Prostate gland (tissue), 2 donors: ENCODE measurements at regions of chr2 and their contacts with region 1.

Region 1: GRCh38 chr2:66699793-66700676 is 265.1 kb downstream of the MEIS1 start:
- DNase-seq: no peak
- H3K4me3 ChIP-seq: no peak overlapping the region
- H3K27ac ChIP-seq: peak overlapping the region; percentile 45
- H3K4me1 ChIP-seq: peaks cover 9% of the 10 kb centered on the region
- H3K27me3 ChIP-seq: no peaks in the 10 kb centered on the region
- CTCF ChIP-seq: no peak
- POLR2A ChIP-seq: no peak

Region 2: DNA sequence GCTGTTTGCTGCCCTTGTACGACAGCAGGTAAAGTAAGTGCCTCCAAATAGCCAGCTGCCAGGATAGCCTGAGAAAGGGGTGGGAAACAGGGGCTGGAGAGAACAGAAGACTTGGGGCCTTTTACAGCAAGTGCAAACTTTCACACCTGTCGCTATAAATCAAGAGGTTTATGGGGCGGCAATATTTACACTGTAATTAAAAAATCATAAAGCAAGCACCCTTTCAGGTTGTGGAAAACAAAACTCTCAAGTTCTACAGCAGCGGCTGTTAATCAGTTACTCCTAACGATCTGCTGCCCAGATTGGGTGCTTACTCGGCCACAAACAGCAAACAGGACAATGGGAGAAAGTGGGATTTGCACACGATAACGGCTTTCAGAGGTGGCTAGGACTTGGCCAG is 337.6 kb after region 1 on chr2:
- intact Hi-C with region 1: loop called (anchors 5 kb)
- DNase-seq: no peak
- H3K4me3 ChIP-seq: no peak overlapping the region
- H3K27ac ChIP-seq: no peak overlapping the region
- H3K4me1 ChIP-seq: no peaks in the 10 kb centered on the region
- H3K27me3 ChIP-seq: no peaks in the 10 kb centered on the region
- CTCF ChIP-seq: no peak
- POLR2A ChIP-seq: no peak